K562 (cell line): ENCODE measurements at regions of chr3 and their contacts with region 1.

Region 1: DNA sequence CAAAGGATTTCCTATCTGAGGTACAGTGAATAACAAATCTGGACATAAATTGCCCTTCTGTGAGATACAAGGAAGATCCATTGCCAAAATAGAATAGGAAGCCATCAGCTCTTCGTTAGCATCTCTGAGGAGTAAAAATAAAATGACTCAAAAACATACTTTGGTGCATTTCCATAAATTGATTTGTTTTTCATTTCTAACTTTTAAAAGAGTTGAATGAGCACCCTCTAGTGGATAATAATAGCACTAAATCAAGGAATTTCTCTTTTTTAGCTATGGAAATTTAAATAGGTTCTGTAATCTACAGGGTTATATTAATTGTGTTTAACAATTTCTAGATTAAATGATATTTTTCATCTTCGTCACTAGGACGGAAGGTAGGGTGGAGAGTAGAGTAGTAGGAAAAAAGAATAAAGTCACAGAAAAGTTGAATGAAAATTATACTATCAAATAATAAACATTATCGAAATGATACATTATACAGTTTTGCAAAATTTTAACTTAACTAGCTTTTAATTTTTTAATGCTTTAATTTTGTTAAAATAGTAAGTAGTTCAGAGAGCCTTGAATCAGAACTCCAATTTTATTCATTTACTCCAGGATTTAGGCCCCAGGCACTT is 6.4 kb downstream of the NSUN3 start:
- DNase-seq: no peak
- ATAC-seq: no peak
- H3K4me3 ChIP-seq: no peak overlapping the region
- H3K27ac ChIP-seq: no peak overlapping the region
- H3K4me1 ChIP-seq: peaks cover 0 to 4% of the 10 kb centered on the region in 2 experiments; a peak in 2 of 5 replicates
- H3K27me3 ChIP-seq: no peaks in the 10 kb centered on the region
- CTCF ChIP-seq: peak in 1 of 3 experiments; percentile 49; a peak in 3 of 6 replicates
- EP300 ChIP-seq: no peak
- POLR2A ChIP-seq: no peak
- RAD21 ChIP-seq: peak; percentile 29 to 47; a peak in 3 of 4 replicates

Region 2: GRCh38 chr3:94004301-94004910 is 64.9 kb before region 1 on chr3:
- CTCF ChIA-PET with region 1: interaction called, 7 read pairs
- POLR2A ChIA-PET with region 1: no interaction called
- in situ Hi-C with region 1: no loop called
- intact Hi-C with region 1: loop called (anchors 1 kb)
- DNase-seq: peak; percentile 27 to 49 (median 28)
- ATAC-seq: peak; percentile 76
- H3K4me3 ChIP-seq: no peak overlapping the region
- H3K27ac ChIP-seq: peak overlapping the region; percentile 53; the same call in 2 of the 3 replicates
- H3K4me1 ChIP-seq: no peaks in the 10 kb centered on the region
- H3K27me3 ChIP-seq: no peaks in the 10 kb centered on the region
- CTCF ChIP-seq: peak; percentile 48 to 72 (median 59); a peak in 5 of 6 replicates
- EP300 ChIP-seq: no peak
- POLR2A ChIP-seq: no peak
- RAD21 ChIP-seq: peak; percentile 52 to 65